Endothelial cell of umbilical vein (primary cell): ENCODE measurements at regions of chr5 and their contacts with region 1.

Region 1: GRCh38 chr5:61408476-61409168 is 76.6 kb downstream of the ZSWIM6 start:
- DNase-seq: peak; percentile 99
- H3K4me3 ChIP-seq: peak overlapping the region in 2 of 3 experiments; percentile 15 to 63
- H3K27ac ChIP-seq: peak overlapping the region; percentile 97
- H3K4me1 ChIP-seq: peaks cover 21% of the 10 kb centered on the region
- H3K27me3 ChIP-seq: no peaks in the 10 kb centered on the region
- CTCF ChIP-seq: no peak
- POLR2A ChIP-seq: peak; percentile 52

Region 2: GRCh38 chr5:61115968-61116367 is 292.7 kb before region 1 on chr5:
- CTCF ChIA-PET with region 1: no interaction called
- POLR2A ChIA-PET with region 1: no interaction called
- dilution Hi-C with region 1: no loop called
- intact Hi-C with region 1: no loop called
- DNase-seq: no peak
- H3K4me3 ChIP-seq: no peak overlapping the region
- H3K27ac ChIP-seq: no peak overlapping the region
- H3K4me1 ChIP-seq: no peaks in the 10 kb centered on the region
- H3K27me3 ChIP-seq: no peaks in the 10 kb centered on the region
- CTCF ChIP-seq: no peak
- POLR2A ChIP-seq: no peak

Region 3: GRCh38 chr5:61449804-61450492 is 41.3 kb after region 1 on chr5:
- CTCF ChIA-PET with region 1: interaction called, 3 read pairs
- POLR2A ChIA-PET with region 1: no interaction called
- dilution Hi-C with region 1: no loop called
- intact Hi-C with region 1: loop called (anchors 2 kb)
- DNase-seq: peak; percentile 88
- H3K4me3 ChIP-seq: no peak overlapping the region
- H3K27ac ChIP-seq: peak overlapping the region; percentile 30
- H3K4me1 ChIP-seq: peaks cover 24% of the 10 kb centered on the region
- H3K27me3 ChIP-seq: no peaks in the 10 kb centered on the region
- CTCF ChIP-seq: no peak
- POLR2A ChIP-seq: no peak

Region 4: GRCh38 chr5:61896811-61897210 is 488.2 kb after region 1 on chr5:
- CTCF ChIA-PET with region 1: no interaction called
- POLR2A ChIA-PET with region 1: no interaction called
- dilution Hi-C with region 1: no loop called
- intact Hi-C with region 1: no loop called
- DNase-seq: no peak
- H3K4me3 ChIP-seq: no peak overlapping the region
- H3K27ac ChIP-seq: no peak overlapping the region
- H3K4me1 ChIP-seq: no peaks in the 10 kb centered on the region
- H3K27me3 ChIP-seq: no peaks in the 10 kb centered on the region
- CTCF ChIP-seq: no peak
- POLR2A ChIP-seq: no peak